CD8-positive, alpha-beta T cell (primary cell): ENCODE measurements at regions of chr10 and their contacts with region 1.

Region 1: DNA sequence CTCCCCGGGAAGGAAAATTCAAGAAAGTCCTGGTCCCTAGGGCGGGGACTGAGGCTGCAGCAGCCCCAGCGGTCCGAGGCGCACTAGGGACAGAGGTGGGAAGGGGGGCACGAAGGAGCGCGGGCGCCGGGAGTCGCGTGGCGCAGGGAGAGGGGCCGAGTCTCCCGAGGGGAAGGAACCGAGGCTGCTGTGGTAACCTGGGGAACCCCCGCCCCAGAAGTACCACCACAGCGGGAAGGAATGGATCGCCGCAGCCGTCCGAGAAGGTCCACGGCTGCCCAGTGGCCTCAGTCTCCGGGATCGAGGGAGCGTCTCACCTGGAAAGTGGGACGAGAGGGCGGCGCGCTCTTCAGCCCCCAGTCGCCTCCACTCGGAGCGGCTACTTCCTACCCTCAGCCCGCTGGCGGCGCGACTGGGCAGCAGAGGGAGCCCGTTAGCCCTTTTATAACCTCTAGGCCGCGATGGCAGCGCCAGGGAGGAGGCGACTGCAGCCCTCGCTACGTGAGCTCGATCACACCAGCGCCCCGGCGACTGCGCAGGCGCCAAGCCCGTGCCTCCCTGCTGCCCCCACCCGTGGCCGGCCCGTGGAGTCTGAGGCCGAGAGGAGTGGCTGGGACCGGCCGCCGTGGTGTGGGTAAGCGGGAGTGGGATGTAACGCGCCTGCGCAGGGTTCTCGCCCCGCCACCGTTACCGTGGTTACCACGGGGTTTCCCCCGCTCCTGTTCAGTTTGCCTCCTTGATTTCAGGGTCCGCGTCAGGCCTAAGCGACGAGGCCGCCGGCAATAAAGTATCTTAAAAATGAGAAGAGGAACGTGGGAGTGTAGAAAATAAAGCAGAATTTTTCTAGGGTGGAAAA is at the start of gene P4HA1:
- DNase-seq: peak; percentile 96 to 100 (median 98)
- ATAC-seq: peak; percentile 84
- H3K4me3 ChIP-seq: peak within 1 kb of the TSS; percentile 72 to 92
- H3K4me3 Mint-ChIP-seq: peak within 1 kb of the TSS; percentile 85
- H3K27ac ChIP-seq: peak within 1 kb of the TSS; percentile 60 to 95
- H3K27ac Mint-ChIP-seq: peak within 1 kb of the TSS; percentile 96
- H3K4me1 ChIP-seq: peaks cover 18% of the 10 kb centered on the region
- H3K4me1 Mint-ChIP-seq: peaks cover 32% of the 10 kb centered on the region
- H3K27me3 ChIP-seq: no peaks in the 10 kb centered on the region
- H3K27me3 Mint-ChIP-seq: no peaks in the 10 kb centered on the region
- CTCF ChIP-seq: peak; percentile 70
- total RNA-seq, gene P4HA1: 9.0 to 10.1 TPM

Region 2: GRCh38 chr10:72354478-72355213 is 742.0 kb before region 1 on chr10 and contains the start of gene DNAJB12:
- CTCF ChIA-PET with region 1: no interaction called
- POLR2A ChIA-PET with region 1: interaction called, 5 read pairs
- intact Hi-C with region 1: loop called in 1 of 2 experiments (anchors 1 kb)
- DNase-seq: peak; percentile 76 to 95 (median 88)
- ATAC-seq: peak; percentile 82
- H3K4me3 ChIP-seq: peak within 1 kb of the TSS; percentile 96 to 98
- H3K4me3 Mint-ChIP-seq: peak within 1 kb of the TSS; percentile 98
- H3K27ac ChIP-seq: peak within 1 kb of the TSS; percentile 87 to 97
- H3K27ac Mint-ChIP-seq: peak within 1 kb of the TSS; percentile 96
- H3K4me1 ChIP-seq: peaks cover 19% of the 10 kb centered on the region
- H3K4me1 Mint-ChIP-seq: peaks cover 45% of the 10 kb centered on the region
- H3K27me3 ChIP-seq: no peaks in the 10 kb centered on the region
- H3K27me3 Mint-ChIP-seq: no peaks in the 10 kb centered on the region
- CTCF ChIP-seq: no peak
- total RNA-seq, gene DNAJB12: 33.9 to 37.5 TPM

Region 3: DNA sequence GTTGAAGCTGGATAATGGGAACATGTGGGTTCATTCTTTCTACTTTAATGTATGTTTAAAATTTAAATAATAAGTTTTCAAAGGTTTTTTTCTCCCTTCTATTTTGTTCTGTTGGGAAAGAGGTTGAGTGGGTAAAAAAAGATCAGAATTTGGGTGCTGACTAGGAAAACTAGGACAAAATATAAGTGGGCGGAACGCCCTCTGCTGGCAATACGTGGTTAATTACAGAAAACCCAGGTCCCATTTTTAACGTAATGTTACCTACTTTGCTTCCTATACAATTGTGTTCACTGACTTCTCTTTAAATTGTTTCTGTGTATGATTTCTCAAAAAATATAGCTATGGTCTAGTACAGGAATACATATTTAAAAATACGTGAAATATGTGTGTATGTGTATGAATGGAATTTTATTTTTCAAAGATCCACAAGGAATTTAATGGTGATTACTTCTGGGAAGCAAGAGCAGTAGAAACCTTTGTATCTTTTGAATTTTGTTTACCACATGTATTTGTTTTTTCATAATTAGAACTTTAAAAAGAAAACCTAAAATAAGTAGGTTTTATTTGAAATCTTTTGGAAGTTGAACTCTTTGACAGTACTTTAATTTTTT is 62.5 kb after region 1 on chr10:
- CTCF ChIA-PET with region 1: interaction called, 66 read pairs
- POLR2A ChIA-PET with region 1: interaction called, 21 read pairs
- intact Hi-C with region 1: loop called (anchors 1 kb)
- DNase-seq: peak; percentile 22 to 76 (median 64)
- ATAC-seq: peak; percentile 71
- H3K4me3 ChIP-seq: no peak overlapping the region
- H3K4me3 Mint-ChIP-seq: no peak overlapping the region
- H3K27ac ChIP-seq: no peak overlapping the region
- H3K27ac Mint-ChIP-seq: no peak overlapping the region
- H3K4me1 ChIP-seq: peaks cover 13% of the 10 kb centered on the region
- H3K4me1 Mint-ChIP-seq: peaks cover 38% of the 10 kb centered on the region
- H3K27me3 ChIP-seq: no peaks in the 10 kb centered on the region
- H3K27me3 Mint-ChIP-seq: no peaks in the 10 kb centered on the region
- CTCF ChIP-seq: peak; percentile 88

Region 4: DNA sequence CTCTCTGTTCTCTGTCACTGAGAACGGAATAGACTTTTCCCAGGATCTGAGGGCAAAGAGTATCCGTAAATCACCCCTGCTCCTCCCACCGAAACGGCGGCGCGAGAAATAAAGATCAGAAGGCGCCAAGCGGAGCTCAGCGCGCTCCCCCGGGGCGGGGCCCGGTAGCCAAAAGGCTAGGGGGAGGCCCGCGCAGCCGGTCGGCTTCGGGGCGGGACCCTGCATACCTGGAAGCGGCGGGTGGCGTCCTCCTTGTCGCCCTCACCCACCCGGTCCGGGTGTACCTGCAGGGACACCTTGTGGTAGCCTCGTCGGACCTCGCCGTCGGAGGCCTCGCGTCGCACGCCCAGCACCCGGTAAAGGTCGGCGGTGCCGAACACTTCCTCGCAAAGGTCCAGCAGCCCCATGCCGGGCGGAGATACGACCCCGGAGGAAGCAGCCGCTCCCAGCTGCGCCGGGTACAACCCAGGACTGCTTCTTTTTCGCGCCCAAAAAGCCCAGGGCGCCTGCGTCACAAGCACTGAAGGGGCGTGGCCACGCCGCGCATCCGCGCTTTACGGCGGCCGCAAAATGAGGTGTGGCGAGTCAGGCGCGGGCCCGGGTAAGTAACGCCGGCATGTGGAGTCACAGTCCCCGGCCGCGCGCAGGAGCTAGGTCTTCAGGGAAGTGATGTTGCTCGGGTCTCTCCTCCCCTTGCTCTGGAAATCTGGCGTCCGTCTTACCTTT is 150.3 kb after region 1 on chr10 and contains the start of gene DNAJC9:
- CTCF ChIA-PET with region 1: interaction called, 3 read pairs
- POLR2A ChIA-PET with region 1: interaction called, 9 read pairs
- intact Hi-C with region 1: loop called (anchors 1 kb)
- DNase-seq: peak; percentile 95 to 98 (median 97)
- ATAC-seq: peak; percentile 88
- H3K4me3 ChIP-seq: peak within 1 kb of the TSS; percentile 88 to 95
- H3K4me3 Mint-ChIP-seq: peak within 1 kb of the TSS; percentile 96
- H3K27ac ChIP-seq: peak within 1 kb of the TSS; percentile 85 to 89
- H3K27ac Mint-ChIP-seq: peak within 1 kb of the TSS; percentile 97
- H3K4me1 ChIP-seq: peaks cover 34% of the 10 kb centered on the region
- H3K4me1 Mint-ChIP-seq: peaks cover 59% of the 10 kb centered on the region
- H3K27me3 ChIP-seq: no peaks in the 10 kb centered on the region
- H3K27me3 Mint-ChIP-seq: no peaks in the 10 kb centered on the region
- CTCF ChIP-seq: peak; percentile 19
- total RNA-seq, gene DNAJC9: 17.6 to 18.4 TPM

Region 5: DNA sequence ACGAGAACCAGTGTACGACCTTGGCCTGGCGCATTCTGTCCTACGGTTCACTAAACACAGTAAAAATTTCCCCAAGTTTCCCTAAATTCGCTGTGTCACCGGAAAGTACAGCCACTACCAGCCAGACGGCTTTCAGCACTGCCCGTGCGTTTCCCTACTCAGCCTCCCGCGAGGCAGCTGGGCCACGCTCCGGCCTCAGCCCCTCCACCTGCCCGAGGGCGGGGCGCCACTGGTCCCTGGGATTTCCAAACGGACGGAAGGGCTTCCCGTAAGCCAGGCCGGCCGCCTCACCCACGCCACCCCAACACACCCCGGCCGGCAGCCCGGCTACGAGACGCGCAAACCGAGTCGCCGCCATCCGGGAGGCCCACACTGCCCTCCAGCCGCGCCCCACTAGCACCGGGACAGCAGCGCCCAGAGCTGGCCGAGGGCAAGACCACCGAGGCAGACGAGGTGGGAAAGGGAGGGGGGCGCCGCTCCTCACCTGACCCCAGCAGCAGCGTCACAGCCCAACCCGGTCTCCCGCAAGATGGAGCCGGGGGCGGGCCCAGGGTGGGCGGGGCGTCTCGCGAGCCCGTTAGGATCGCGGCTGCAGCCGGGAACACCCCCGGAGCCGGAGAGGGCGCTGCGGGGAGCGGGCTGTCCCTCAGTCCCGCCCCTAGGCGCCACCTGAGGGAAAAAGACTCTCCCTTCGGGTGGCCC is 317.0 kb after region 1 on chr10 and contains the start of gene ANXA7:
- CTCF ChIA-PET with region 1: no interaction called
- POLR2A ChIA-PET with region 1: interaction called, 3 read pairs
- intact Hi-C with region 1: loop called in 1 of 2 experiments (anchors 5 kb)
- DNase-seq: peak; percentile 85 to 95 (median 94)
- ATAC-seq: peak; percentile 95
- H3K4me3 ChIP-seq: peak within 1 kb of the TSS; percentile 85 to 97
- H3K4me3 Mint-ChIP-seq: peak within 1 kb of the TSS; percentile 88
- H3K27ac ChIP-seq: peak within 1 kb of the TSS; percentile 95 to 96
- H3K27ac Mint-ChIP-seq: peak within 1 kb of the TSS; percentile 92
- H3K4me1 ChIP-seq: peaks cover 14% of the 10 kb centered on the region
- H3K4me1 Mint-ChIP-seq: peaks cover 47% of the 10 kb centered on the region
- H3K27me3 ChIP-seq: no peaks in the 10 kb centered on the region
- H3K27me3 Mint-ChIP-seq: no peaks in the 10 kb centered on the region
- CTCF ChIP-seq: no peak
- total RNA-seq, gene ANXA7: 94.8 to 95.6 TPM